H1 (cell line): ENCODE measurements at regions of chr1 and their contacts with region 1.

Region 1: GRCh38 chr1:161292631-161293030 is 17.1 kb downstream of the MPZ start:
- DNase-seq: no peak
- H3K4me3 ChIP-seq: no peak overlapping the region
- H3K27ac ChIP-seq: no peak overlapping the region
- H3K4me1 ChIP-seq: peaks cover 0 to 2% (median 0%) of the 10 kb centered on the region in 4 experiments; a peak in 1 of 7 replicates
- H3K27me3 ChIP-seq: no peaks in the 10 kb centered on the region
- CTCF ChIP-seq: no peak
- EP300 ChIP-seq: no peak
- POLR2A ChIP-seq: no peak
- RAD21 ChIP-seq: no peak

Region 2: GRCh38 chr1:161209790-161210409 is 82.7 kb before region 1 on chr1:
- CTCF ChIA-PET with region 1: interaction called, 26 read pairs
- POLR2A ChIA-PET with region 1: no interaction called
- DNase-seq: peak; percentile 67 to 92
- H3K4me3 ChIP-seq: no peak overlapping the region
- H3K27ac ChIP-seq: 0 out of 2 replicates have a peak overlapping the region, but pooled peaks have one; percentile 5
- H3K4me1 ChIP-seq: peaks cover 0 to 4% (median 1%) of the 10 kb centered on the region in 4 experiments; a peak in 4 of 7 replicates
- H3K27me3 ChIP-seq: no peaks in the 10 kb centered on the region
- CTCF ChIP-seq: peak; percentile 89 to 98 (median 97)
- EP300 ChIP-seq: 0 out of 3 replicates have a peak, but pooled peaks of 1 of the 2 experiments have one; percentile 41
- POLR2A ChIP-seq: no peak
- RAD21 ChIP-seq: peak; percentile 94 to 98

Region 3: DNA sequence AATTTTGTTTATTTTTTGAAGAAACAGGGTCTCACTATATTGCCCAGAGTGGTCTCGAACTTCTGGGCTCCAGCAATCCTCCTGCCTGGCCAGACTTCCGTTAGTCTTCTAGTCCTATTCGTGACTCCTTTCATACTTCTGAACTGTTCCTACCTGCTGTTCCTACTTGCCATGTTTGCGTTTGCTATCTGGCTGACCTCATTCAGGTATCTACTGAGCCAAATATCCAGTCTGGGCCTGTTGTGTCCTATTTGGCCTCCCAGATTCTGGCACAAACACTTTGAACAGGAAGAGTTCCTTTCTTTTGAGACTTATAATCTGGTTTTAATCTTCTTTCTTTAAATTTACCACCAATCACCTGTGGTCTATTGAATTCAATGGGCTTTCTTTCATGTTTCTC is 47.7 kb before region 1 on chr1:
- CTCF ChIA-PET with region 1: interaction called, 13 read pairs
- POLR2A ChIA-PET with region 1: no interaction called
- DNase-seq: no peak
- H3K4me3 ChIP-seq: no peak overlapping the region
- H3K27ac ChIP-seq: no peak overlapping the region
- H3K4me1 ChIP-seq: no peaks in the 10 kb centered on the region
- H3K27me3 ChIP-seq: no peaks in the 10 kb centered on the region
- CTCF ChIP-seq: no peak
- EP300 ChIP-seq: no peak
- POLR2A ChIP-seq: no peak
- RAD21 ChIP-seq: no peak

Region 4: GRCh38 chr1:161266202-161266601 is 26.4 kb before region 1 on chr1:
- CTCF ChIA-PET with region 1: interaction called, 16 read pairs
- POLR2A ChIA-PET with region 1: interaction called, 5 read pairs
- DNase-seq: no peak
- H3K4me3 ChIP-seq: no peak overlapping the region
- H3K27ac ChIP-seq: no peak overlapping the region
- H3K4me1 ChIP-seq: peaks cover under 1 to 11% (median 2%) of the 10 kb centered on the region in 4 experiments; a peak in 4 of 7 replicates
- H3K27me3 ChIP-seq: no peaks in the 10 kb centered on the region; a peak in 2 of 7 replicates
- CTCF ChIP-seq: no peak
- EP300 ChIP-seq: no peak
- POLR2A ChIP-seq: no peak
- RAD21 ChIP-seq: no peak

Region 5: GRCh38 chr1:161305867-161306519 is 13.4 kb after region 1 on chr1:
- CTCF ChIA-PET with region 1: interaction called, 83 read pairs
- POLR2A ChIA-PET with region 1: interaction called, 3 read pairs
- DNase-seq: peak; percentile 96 to 97
- H3K4me3 ChIP-seq: peak overlapping the region; percentile 70 to 87 (median 79)
- H3K27ac ChIP-seq: no peak overlapping the region
- H3K4me1 ChIP-seq: peaks cover 0 to 16% (median 9%) of the 10 kb centered on the region in 4 experiments; a peak in 6 of 7 replicates
- H3K27me3 ChIP-seq: no peaks in the 10 kb centered on the region
- CTCF ChIP-seq: peak; percentile 84 to 90 (median 89)
- EP300 ChIP-seq: peak in 1 of 2 experiments; percentile 35; a peak in 1 of 3 replicates
- POLR2A ChIP-seq: peak in 1 of 2 experiments; percentile 55; a peak in 1 of 3 replicates
- RAD21 ChIP-seq: peak; percentile 82 to 85